K562 (cell line): ENCODE measurements at regions of chr1 and their contacts with region 1.

Region 1: GRCh38 chr1:182446033-182446669 is 3.8 kb upstream of the RGSL1 start:
- DNase-seq: peak; percentile 63 to 77 (median 69)
- ATAC-seq: peak; percentile 89
- H3K4me3 ChIP-seq: no peak overlapping the region
- H3K27ac ChIP-seq: no peak overlapping the region
- H3K4me1 ChIP-seq: no peaks in the 10 kb centered on the region; a peak in 1 of 5 replicates
- H3K27me3 ChIP-seq: peaks cover 0 to 6% of the 10 kb centered on the region in 2 experiments; a peak in 3 of 5 replicates
- CTCF ChIP-seq: peak; percentile 74 to 89 (median 81)
- EP300 ChIP-seq: no peak
- POLR2A ChIP-seq: no peak
- RAD21 ChIP-seq: peak; percentile 90 to 98

Region 2: DNA sequence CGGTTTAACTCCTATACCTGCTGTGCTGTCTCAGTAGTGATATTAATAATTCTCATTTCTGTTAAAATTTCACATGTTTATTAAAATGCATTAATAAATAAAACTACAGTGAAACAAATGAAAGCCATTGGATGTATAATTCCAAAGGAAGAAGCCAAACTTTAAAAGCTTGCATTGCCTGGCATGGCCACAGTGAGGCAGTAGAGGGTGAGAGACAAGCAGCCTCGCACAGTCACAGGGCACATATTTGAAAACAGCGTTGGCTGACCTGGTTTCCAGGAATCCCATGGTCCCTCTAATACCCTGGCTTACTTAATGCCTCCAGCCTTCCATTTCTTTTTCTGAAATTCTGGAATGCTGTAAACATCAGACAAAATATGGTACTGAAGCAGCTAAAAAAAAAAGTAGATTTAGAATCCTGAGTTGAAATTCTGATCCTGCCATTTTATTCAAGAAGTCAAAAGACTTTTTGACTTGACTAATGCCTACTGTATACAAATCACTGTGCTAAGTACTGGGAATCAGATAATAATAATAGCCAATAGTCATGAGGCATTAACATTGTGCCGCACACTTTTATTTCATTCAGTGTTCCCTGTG is 149.6 kb after region 1 on chr1:
- CTCF ChIA-PET with region 1: no interaction called
- POLR2A ChIA-PET with region 1: no interaction called
- in situ Hi-C with region 1: no loop called
- intact Hi-C with region 1: loop called (anchors 2 kb)
- DNase-seq: peak; percentile 72 to 76 (median 73)
- ATAC-seq: peak; percentile 51; the same call in 2 of the 3 replicates
- H3K4me3 ChIP-seq: no peak overlapping the region
- H3K27ac ChIP-seq: no peak overlapping the region
- H3K4me1 ChIP-seq: 0 out of 5 replicates have a peak, but pooled peaks cover 0 to 3% of the 10 kb centered on the region in 2 experiments
- H3K27me3 ChIP-seq: peaks cover 0 to 8% of the 10 kb centered on the region in 2 experiments; a peak in 1 of 5 replicates
- CTCF ChIP-seq: peak; percentile 82 to 93 (median 90)
- EP300 ChIP-seq: peak; percentile 17; the same call in 1 of the 2 replicates
- POLR2A ChIP-seq: no peak
- RAD21 ChIP-seq: peak; percentile 81